ENCODE measurements at regions of chr12 and their contacts with region 1.

Region 1: GRCh38 chr12:93441617-93442410 is at the start of gene UBE2N:
- DNase-seq: peak; percentile 96 to 98 (median 97)
- ATAC-seq: peak; percentile 95
- H3K4me3 ChIP-seq: peak within 1 kb of the TSS; percentile 66
- H3K4me3 Mint-ChIP-seq: peak within 1 kb of the TSS; percentile 89 to 100 (median 97)
- H3K27ac ChIP-seq: peak within 1 kb of the TSS; percentile 98
- H3K27ac Mint-ChIP-seq: peak within 1 kb of the TSS; percentile 96 to 100 (median 98)
- H3K4me1 ChIP-seq: peaks cover 35 to 48% of the 10 kb centered on the region in 2 donors
- H3K4me1 Mint-ChIP-seq: peaks cover 44 to 54% (median 49%) of the 10 kb centered on the region in 7 donors
- H3K27me3 ChIP-seq: no peaks in the 10 kb centered on the region
- H3K27me3 Mint-ChIP-seq: no peaks in the 10 kb centered on the region
- total RNA-seq, gene UBE2N: 76.6 to 180 (median 77.5) TPM

Region 2: DNA sequence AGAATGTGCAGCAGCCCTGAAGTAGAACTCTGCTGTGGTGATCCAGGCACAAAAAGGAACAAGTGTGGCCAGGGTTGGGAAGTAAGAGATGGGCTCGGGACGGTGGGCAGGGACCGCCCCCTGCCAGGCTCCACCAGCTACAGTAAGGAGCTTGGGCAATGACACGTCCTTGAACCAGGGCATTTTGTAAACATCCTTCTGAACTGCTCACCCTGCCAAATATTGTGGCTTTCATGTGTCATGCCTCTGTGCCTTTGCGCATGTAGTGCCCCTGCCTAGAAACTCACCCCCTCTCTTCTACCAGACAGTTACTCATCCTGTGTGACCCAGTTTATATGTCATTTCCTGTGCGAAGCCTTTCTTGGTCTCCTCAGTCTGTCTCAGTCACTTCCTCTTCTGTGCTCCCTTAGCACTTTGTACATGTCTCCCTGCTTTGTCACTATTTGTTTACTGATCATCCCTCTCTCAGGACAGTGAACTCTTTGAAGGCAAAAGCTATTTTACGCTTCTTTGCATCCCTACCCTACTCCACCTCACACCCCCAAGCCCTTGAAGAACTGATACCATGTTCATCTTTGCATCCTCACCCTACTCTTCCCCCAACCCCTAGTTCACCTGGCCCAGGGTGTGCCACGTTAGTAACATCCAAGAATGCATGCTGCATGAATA is 847.9 kb before region 1 on chr12:
- CTCF ChIA-PET with region 1: no interaction called
- POLR2A ChIA-PET with region 1: no interaction called
- intact Hi-C with region 1: loop called in 1 of 2 experiments (anchors 5 kb)
- DNase-seq: peak; percentile 51 to 97 (median 92)
- ATAC-seq: peak; percentile 95
- H3K4me3 ChIP-seq: peak overlapping the region; percentile 16
- H3K4me3 Mint-ChIP-seq: peak overlapping the region; percentile 22 to 83 (median 72)
- H3K27ac ChIP-seq: peak overlapping the region; percentile 86
- H3K27ac Mint-ChIP-seq: peak overlapping the region; percentile 90 to 100 (median 98)
- H3K4me1 ChIP-seq: peaks cover 27 to 30% of the 10 kb centered on the region in 2 donors
- H3K4me1 Mint-ChIP-seq: peaks cover 23 to 74% (median 44%) of the 10 kb centered on the region in 7 donors
- H3K27me3 ChIP-seq: no peaks in the 10 kb centered on the region
- H3K27me3 Mint-ChIP-seq: no peaks in the 10 kb centered on the region

Region 3: DNA sequence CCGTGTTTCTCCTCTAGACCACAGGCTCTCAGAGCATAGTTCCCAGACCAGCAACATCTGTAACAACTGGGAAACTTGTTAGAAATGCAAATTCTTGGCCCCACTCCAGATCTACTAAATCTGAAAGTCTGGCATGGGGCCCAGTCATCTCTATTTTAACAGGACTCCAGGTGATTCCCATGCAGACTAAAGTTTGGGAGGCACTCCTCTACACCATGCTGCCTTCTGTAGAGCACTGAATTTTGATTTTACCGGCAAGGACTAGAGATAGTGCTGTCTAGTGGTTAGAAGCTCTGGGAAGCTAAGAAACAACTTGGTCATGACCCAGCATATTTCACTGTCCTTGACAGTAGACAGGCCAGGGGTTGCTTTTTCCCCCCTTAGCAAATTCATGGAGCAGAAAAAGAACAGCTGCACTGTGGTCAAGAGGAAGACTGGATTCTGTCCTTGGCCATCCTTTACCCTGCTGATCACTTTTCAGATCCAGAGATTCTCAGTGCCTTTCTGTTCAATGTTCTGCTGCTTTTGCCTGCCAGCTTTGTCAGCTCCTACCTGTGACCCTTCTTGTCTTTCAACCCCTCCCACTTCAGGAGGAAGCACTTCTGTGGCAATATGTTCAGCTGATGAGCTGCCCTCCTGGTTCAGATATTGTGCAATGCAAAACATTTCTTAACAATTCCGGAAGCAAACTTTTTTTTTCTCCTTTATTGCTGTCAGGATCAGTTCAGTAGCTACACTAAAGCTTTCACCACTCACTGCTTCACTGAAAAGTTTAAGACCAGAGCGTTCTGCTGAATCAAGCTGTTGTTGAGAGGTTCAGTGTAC is 197.9 kb before region 1 on chr12:
- CTCF ChIA-PET with region 1: no interaction called
- POLR2A ChIA-PET with region 1: interaction called, 4 read pairs
- intact Hi-C with region 1: loop called in 1 of 2 experiments (anchors 5 kb)
- DNase-seq: peak in 6 of 9 donors; percentile 20 to 60 (median 40)
- ATAC-seq: peak; percentile 68
- H3K4me3 ChIP-seq: no peak overlapping the region
- H3K4me3 Mint-ChIP-seq: peak overlapping the region; percentile 12 to 79 (median 70)
- H3K27ac ChIP-seq: peak overlapping the region; percentile 46
- H3K27ac Mint-ChIP-seq: peak overlapping the region in 8 of 9 donors; percentile 75 to 91 (median 88)
- H3K4me1 ChIP-seq: peaks cover 11 to 23% of the 10 kb centered on the region in 2 donors
- H3K4me1 Mint-ChIP-seq: peaks cover 27 to 65% (median 56%) of the 10 kb centered on the region in 7 donors
- H3K27me3 ChIP-seq: no peaks in the 10 kb centered on the region
- H3K27me3 Mint-ChIP-seq: no peaks in the 10 kb centered on the region

Region 4: DNA sequence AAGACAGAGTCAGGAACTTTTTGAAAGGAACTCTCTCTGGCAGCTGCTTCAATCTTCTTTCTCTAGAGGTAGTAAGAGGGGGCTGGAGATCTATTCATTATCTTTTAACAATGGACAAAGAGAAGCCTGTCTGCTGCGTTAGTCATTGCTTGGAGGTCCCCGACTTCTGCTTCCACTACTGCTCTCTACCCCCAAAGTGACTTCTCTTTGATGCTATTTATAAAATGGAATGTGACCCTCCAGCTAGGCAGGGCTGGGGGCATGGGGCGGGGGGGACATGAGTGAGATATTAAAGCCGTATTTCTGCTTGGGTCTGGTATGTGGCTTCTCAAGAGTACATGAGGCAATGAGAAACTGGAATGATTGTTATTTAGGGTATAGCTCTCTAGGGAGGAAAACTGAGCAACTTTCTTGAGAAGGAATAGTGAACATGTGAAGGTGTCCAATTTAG is 105.5 kb before region 1 on chr12:
- CTCF ChIA-PET with region 1: no interaction called
- POLR2A ChIA-PET with region 1: no interaction called
- intact Hi-C with region 1: no loop called
- DNase-seq: no peak
- ATAC-seq: no peak
- H3K4me3 ChIP-seq: no peak overlapping the region
- H3K4me3 Mint-ChIP-seq: no peak overlapping the region
- H3K27ac ChIP-seq: no peak overlapping the region
- H3K27ac Mint-ChIP-seq: no peak overlapping the region
- H3K4me1 ChIP-seq: no peaks in the 10 kb centered on the region
- H3K4me1 Mint-ChIP-seq: no peaks in the 10 kb centered on the region
- H3K27me3 ChIP-seq: no peaks in the 10 kb centered on the region
- H3K27me3 Mint-ChIP-seq: no peaks in the 10 kb centered on the region

Region 5: GRCh38 chr12:93427779-93428563 is 13.8 kb before region 1 on chr12:
- CTCF ChIA-PET with region 1: no interaction called
- POLR2A ChIA-PET with region 1: interaction called, 6 read pairs
- intact Hi-C with region 1: loop called (anchors 1 to 2 kb)
- DNase-seq: no peak
- ATAC-seq: no peak
- H3K4me3 ChIP-seq: no peak overlapping the region
- H3K4me3 Mint-ChIP-seq: peak overlapping the region in 8 of 10 donors; percentile 3 to 66 (median 39)
- H3K27ac ChIP-seq: peak overlapping the region; percentile 16
- H3K27ac Mint-ChIP-seq: peak overlapping the region in 8 of 9 donors; percentile 14 to 90 (median 68)
- H3K4me1 ChIP-seq: peaks cover 26 to 43% of the 10 kb centered on the region in 2 donors
- H3K4me1 Mint-ChIP-seq: peaks cover 55 to 96% (median 83%) of the 10 kb centered on the region in 7 donors
- H3K27me3 ChIP-seq: no peaks in the 10 kb centered on the region
- H3K27me3 Mint-ChIP-seq: no peaks in the 10 kb centered on the region

Region 6: GRCh38 chr12:93467351-93468007 is 25.7 kb after region 1 on chr12 and contains the start of gene MRPL42:
- CTCF ChIA-PET with region 1: interaction called, 8 read pairs
- POLR2A ChIA-PET with region 1: interaction called, 16 read pairs
- intact Hi-C with region 1: loop called (anchors 1 kb)
- DNase-seq: peak; percentile 86 to 96 (median 94)
- ATAC-seq: peak; percentile 97
- H3K4me3 ChIP-seq: peak within 1 kb of the TSS; percentile 94
- H3K4me3 Mint-ChIP-seq: peak within 1 kb of the TSS; percentile 85 to 96 (median 93)
- H3K27ac ChIP-seq: peak within 1 kb of the TSS; percentile 85
- H3K27ac Mint-ChIP-seq: peak within 1 kb of the TSS; percentile 90 to 98 (median 95)
- H3K4me1 ChIP-seq: peaks cover 8 to 10% of the 10 kb centered on the region in 2 donors
- H3K4me1 Mint-ChIP-seq: peaks cover 28 to 48% (median 36%) of the 10 kb centered on the region in 7 donors
- H3K27me3 ChIP-seq: no peaks in the 10 kb centered on the region
- H3K27me3 Mint-ChIP-seq: no peaks in the 10 kb centered on the region
- total RNA-seq, gene MRPL42: 30.1 to 65.8 (median 45.6) TPM

Region 7: DNA sequence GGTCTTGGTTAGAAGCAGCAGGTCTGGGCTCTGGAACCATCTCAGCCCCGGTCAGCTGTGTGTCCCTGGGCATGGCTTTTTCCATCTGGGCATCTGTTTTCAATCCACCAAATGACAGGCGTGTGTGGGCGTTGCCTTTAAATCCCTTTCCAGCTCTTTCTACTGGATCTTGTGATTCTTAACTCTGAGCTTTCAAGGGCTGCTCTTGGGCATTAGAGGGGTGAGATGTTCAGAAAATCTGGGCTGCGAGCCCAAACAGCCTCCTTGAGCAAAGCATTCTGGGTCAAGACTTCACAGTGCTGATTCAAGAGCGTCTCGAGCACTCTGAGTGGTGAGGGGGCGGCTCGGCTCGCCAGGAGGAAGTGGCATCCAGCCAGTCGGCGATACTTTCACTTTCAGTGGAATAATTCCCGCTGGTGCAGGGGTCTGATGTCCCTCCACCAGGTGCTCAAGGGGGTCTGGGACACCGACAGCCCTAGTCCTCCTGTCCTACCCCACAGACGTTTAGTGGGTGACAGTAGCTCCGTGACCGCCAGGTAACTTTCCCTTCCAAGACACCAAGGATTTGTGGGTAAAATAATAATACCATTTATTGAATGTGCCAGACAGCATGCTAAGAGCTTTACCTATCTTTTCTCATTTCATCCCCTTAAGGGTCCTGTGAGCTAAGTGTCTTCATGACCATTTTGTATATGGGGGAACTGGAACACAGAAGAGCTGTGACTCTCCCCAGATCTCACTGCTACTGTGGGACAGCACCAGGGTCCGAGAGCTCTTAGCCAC is 820.6 kb after region 1 on chr12:
- CTCF ChIA-PET with region 1: no interaction called
- POLR2A ChIA-PET with region 1: no interaction called
- intact Hi-C with region 1: loop called in 1 of 2 experiments (anchors 5 kb)
- DNase-seq: peak; percentile 50 to 81 (median 72)
- ATAC-seq: peak; percentile 89
- H3K4me3 ChIP-seq: peak overlapping the region; percentile 94
- H3K4me3 Mint-ChIP-seq: peak overlapping the region; percentile 80 to 99 (median 97)
- H3K27ac ChIP-seq: peak overlapping the region; percentile 91
- H3K27ac Mint-ChIP-seq: peak overlapping the region; percentile 91 to 100 (median 99)
- H3K4me1 ChIP-seq: peaks cover 15 to 18% of the 10 kb centered on the region in 2 donors
- H3K4me1 Mint-ChIP-seq: peaks cover 23 to 52% (median 46%) of the 10 kb centered on the region in 7 donors
- H3K27me3 ChIP-seq: no peaks in the 10 kb centered on the region
- H3K27me3 Mint-ChIP-seq: no peaks in the 10 kb centered on the region